ENCODE measurements at regions of chr5 and their contacts with region 1.

Region 1: DNA sequence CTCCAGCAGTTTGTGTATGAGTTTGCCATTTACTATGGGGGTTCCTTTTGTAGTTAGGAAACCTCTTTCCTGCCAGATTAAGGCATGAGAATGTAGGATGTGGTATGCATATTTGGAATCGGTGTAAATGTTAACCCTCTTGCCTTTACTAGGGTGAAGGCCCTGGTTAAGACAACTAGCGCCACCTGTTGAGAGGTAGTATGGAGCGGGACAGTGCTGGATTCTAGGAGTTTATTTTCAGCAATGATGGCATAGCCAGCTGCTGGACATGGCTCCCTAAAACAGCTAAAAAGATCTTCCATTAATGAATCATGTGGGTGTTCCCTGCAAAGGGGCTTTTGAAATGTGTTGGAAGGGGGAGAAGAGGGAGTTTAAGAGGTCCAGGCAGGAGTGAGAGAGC is 30.7 kb upstream of the GPX3 start:
- DNase-seq: no peak
- H3K4me3 ChIP-seq: no peak overlapping the region
- H3K27ac ChIP-seq: no peak overlapping the region
- H3K4me1 ChIP-seq: no peaks in the 10 kb centered on the region
- H3K27me3 ChIP-seq: no peaks in the 10 kb centered on the region
- CTCF ChIP-seq: no peak
- POLR2A ChIP-seq: no peak

Region 2: GRCh38 chr5:150434464-150434863 is 555.2 kb before region 1 on chr5:
- intact Hi-C with region 1: loop called (anchors 5 kb)
- DNase-seq: peak in 1 of 2 donors; percentile 77
- H3K4me3 ChIP-seq: no peak overlapping the region
- H3K27ac ChIP-seq: no peak overlapping the region
- H3K4me1 ChIP-seq: no peaks in the 10 kb centered on the region
- H3K27me3 ChIP-seq: no peaks in the 10 kb centered on the region
- CTCF ChIP-seq: no peak
- POLR2A ChIP-seq: no peak

Measured in breast epithelium (tissue), 4 donors.